ENCODE measurements at regions of chr1 and their contacts with region 1.

Region 1: GRCh38 chr1:42747125-42747524 is 7.1 kb upstream of the CLDN19 start:
- DNase-seq: peak; percentile 58
- CTCF ChIP-seq: peak; percentile 53

Region 2: DNA sequence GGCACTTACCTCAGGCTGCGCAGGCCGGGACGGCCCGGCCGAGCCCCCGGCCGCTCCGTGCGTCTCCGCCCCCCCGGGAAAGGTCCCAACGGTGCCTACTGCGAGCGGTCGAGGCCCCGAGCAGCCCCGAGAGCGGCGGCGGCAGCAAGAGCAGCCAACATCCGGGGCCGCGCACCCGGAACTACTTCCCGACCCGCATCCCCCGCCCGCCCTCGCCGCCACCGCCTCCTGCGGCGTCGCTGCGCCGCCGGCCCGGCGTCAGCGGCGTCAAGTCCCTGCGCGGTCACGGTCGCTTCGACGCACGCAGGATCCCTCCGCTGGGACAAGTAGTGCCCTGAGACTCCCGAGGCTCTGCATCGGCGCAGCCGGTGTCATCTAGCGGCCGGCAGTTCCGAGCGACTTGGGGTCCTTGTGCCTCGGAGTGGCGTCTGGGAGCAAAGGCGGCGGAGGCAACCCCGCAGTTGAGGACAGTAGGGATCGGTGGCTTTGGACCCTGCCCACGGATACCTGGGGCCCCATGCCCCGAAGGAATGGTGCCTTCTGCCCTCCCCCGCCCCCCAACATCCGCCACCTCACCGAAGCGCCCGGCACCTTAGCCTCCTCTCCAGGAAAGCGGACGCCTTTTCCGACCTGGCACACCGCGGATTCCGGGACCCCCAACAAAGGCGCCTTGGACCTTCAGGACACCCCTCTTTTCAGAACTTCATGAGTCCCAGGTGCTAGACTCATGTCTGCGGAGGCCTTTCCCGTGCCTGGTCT is 411.9 kb before region 1 on chr1 and contains the start of gene FOXJ3:
- in situ Hi-C with region 1: loop called (anchors 25 kb)
- DNase-seq: peak; percentile 95
- CTCF ChIP-seq: peak; percentile 40

Region 3: GRCh38 chr1:42576935-42577334 is 170.2 kb before region 1 on chr1:
- in situ Hi-C with region 1: loop called (anchors 10 kb)
- DNase-seq: no peak
- CTCF ChIP-seq: no peak

Region 4: DNA sequence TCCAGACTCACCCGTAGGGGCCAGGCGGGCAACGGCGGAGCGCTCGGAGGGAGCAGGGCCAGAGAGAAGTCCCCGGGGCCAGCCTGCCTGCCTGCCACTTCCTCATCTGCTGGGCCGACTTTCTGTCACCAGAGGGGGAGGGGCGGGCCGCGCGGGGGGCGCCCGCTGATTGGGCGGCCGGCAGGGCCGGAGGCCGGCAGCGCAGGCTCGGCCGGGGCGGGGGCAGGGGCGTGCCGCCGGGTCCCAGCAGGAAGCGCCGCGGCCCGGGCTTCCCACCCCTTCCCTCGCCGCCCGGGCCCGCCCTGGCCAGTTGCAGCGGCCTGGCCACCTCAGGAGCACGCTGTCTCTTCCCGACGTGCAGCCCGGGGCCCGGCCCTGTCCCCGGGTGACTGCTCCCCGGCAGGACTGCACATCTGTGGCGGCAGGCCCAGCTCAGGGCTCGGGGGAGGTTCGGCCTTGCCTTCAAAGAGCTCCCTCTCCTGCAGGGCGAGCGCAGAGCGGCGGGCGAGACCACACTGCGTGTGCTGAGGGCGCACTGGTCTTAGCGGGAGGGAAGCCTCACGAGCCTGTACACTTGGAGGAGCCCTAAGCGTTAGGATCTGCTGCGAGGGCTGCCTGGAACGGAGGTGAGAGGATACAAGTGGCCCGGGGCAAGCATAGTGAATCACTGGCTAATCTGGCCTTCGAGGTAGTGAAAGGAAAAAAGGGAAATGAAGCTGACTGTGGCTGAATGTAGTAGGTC is 621.0 kb after region 1 on chr1 and contains the start of gene ELOVL1:
- in situ Hi-C with region 1: no loop called
- DNase-seq: peak; percentile 98
- CTCF ChIP-seq: peak; percentile 35